ENCODE measurements at regions of chr13 and their contacts with region 1.

Region 1: DNA sequence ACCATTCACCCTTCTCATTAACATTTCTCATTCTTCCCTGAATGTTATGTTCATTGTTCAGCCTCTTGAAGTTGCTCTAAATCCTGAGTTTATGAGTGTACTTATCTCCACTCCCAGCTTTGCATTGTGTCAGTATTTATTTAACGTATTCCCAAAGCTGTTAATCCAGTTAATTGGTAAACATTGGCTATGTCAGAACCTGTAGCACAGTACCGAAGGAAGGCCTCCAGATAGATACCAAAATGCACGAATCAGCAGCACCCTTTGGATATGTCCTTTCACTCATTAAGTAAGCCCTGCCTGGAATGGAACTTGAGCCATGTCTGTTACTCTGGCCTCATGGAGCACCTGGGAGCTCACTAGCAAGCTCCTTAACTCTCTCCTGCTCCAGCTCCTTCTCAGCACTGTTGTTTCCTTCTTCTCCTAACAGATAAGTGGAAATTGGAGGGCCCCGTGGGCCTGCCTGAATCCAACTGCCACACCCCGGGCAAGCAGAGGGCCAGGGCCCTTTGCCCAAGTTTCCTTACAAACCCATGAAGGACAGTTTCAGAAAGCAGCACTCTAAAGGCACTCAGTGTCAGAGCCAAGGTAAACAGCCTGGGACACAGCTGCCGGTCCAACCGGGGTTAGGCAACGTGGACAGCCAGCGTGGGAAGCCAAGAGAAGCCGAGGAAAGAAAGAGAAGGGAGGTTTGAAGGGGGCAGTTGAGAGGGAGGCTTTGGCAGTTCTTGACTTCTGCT is 155.0 kb upstream of the SERP2 start:
- DNase-seq: peak; percentile 85
- H3K4me3 ChIP-seq: no peak overlapping the region
- H3K27ac ChIP-seq: peak overlapping the region; percentile 63 to 87 (median 78)
- H3K4me1 ChIP-seq: peaks cover 0 to 61% (median 52%) of the 10 kb centered on the region in 4 donors
- H3K27me3 ChIP-seq: no peaks in the 10 kb centered on the region
- CTCF ChIP-seq: no peak
- EP300 ChIP-seq: peak in 1 of 4 donors; percentile 28
- POLR2A ChIP-seq: no peak

Region 2: GRCh38 chr13:44050450-44051063 is 168.1 kb before region 1 on chr13:
- intact Hi-C with region 1: loop called (anchors 5 kb)
- DNase-seq: no peak
- H3K4me3 ChIP-seq: no peak overlapping the region
- H3K27ac ChIP-seq: peak overlapping the region in 1 of 4 donors; percentile 52
- H3K4me1 ChIP-seq: peaks cover 0 to 31% (median 27%) of the 10 kb centered on the region in 4 donors
- H3K27me3 ChIP-seq: no peaks in the 10 kb centered on the region
- CTCF ChIP-seq: peak; percentile 60 to 86 (median 72)
- EP300 ChIP-seq: no peak
- POLR2A ChIP-seq: no peak

Region 3: GRCh38 chr13:44141725-44142539 is 76.7 kb before region 1 on chr13:
- intact Hi-C with region 1: loop called (anchors 5 kb)
- DNase-seq: peak; percentile 99
- H3K4me3 ChIP-seq: peak overlapping the region; percentile 43 to 57 (median 52)
- H3K27ac ChIP-seq: peak overlapping the region; percentile 86 to 95 (median 90)
- H3K4me1 ChIP-seq: peaks cover 0 to 17% (median 10%) of the 10 kb centered on the region in 4 donors
- H3K27me3 ChIP-seq: no peaks in the 10 kb centered on the region
- CTCF ChIP-seq: peak in 1 of 4 experiments; percentile 32
- EP300 ChIP-seq: no peak
- POLR2A ChIP-seq: peak; percentile 91 to 93

Region 4: DNA sequence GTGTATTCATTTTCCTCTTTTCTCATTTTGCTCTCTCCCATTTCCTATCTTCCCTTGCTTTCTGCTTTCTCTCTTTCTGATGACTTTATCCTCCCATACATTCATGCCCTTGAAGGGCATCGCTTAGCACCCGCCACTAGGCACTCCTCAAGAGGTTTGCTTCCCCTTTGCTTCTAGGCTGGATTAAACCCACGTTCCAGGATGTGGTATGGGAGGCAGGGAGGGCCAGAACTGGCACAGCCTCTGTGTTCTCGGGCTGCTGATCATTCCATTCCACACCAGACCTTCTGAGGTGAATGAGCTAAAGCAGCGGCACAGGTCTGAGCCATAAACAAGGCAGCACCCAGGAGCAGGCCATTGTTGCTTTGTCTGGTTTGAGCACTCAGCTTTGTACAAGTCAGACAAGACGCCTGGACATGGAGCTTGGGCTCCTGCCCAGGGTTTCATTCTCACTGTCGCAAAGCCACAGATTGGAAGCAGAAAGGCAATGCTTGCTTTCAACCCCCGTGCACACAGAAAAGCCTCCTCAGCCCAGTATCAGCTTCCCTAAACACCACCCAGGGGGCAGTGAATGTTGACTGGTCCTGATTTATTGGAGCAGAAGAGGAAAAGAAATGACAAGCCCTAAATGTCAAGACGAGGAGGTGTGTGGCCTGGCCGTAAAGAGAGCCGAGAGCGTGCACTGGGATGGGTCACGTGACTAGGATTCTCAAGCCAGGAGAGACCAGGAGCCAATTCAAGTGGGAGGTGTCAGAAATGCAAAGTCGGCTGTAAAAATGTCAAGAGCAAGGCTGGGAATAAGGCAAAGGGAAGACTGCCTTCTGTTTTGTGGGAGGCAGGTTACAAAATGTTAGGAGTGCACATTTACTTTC is 63.0 kb before region 1 on chr13:
- intact Hi-C with region 1: loop called (anchors 5 kb)
- DNase-seq: peak; percentile 93
- H3K4me3 ChIP-seq: peak overlapping the region; percentile 7 to 40 (median 24)
- H3K27ac ChIP-seq: peak overlapping the region; percentile 77 to 82 (median 82)
- H3K4me1 ChIP-seq: peaks cover 0 to 48% (median 38%) of the 10 kb centered on the region in 4 donors
- H3K27me3 ChIP-seq: no peaks in the 10 kb centered on the region
- CTCF ChIP-seq: no peak
- EP300 ChIP-seq: peak in 1 of 4 donors; percentile 77
- POLR2A ChIP-seq: no peak

Region 5: DNA sequence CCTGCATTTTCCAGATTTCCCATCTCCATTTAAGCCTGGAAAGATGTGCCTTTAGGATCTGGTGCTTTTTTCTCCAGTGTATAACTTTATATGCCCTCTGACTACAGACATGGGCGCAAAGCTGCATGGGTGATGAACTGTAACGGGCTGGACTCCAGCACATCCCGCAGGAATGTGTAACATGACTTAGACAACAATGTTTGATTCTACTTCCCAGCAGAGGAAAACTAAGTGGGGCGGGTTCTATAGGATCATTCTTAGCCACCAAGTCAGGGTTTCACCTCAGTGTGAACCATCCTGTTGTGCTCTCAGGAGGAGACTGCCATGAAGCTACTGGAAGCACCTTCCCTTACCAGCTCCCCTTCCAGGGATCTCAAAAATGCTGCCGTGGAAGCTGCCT is 61.8 kb after region 1 on chr13:
- intact Hi-C with region 1: no loop called
- DNase-seq: no peak
- H3K4me3 ChIP-seq: no peak overlapping the region
- H3K27ac ChIP-seq: no peak overlapping the region
- H3K4me1 ChIP-seq: peaks cover 0 to 25% (median 15%) of the 10 kb centered on the region in 4 donors
- H3K27me3 ChIP-seq: no peaks in the 10 kb centered on the region
- CTCF ChIP-seq: no peak
- EP300 ChIP-seq: no peak
- POLR2A ChIP-seq: no peak

Region 6: GRCh38 chr13:44306401-44307192 is 87.9 kb after region 1 on chr13:
- intact Hi-C with region 1: loop called (anchors 2 kb)
- DNase-seq: peak; percentile 90
- H3K4me3 ChIP-seq: no peak overlapping the region
- H3K27ac ChIP-seq: peak overlapping the region; percentile 76 to 90 (median 86)
- H3K4me1 ChIP-seq: peaks cover 0 to 99% (median 91%) of the 10 kb centered on the region in 4 donors
- H3K27me3 ChIP-seq: no peaks in the 10 kb centered on the region
- CTCF ChIP-seq: no peak
- EP300 ChIP-seq: peak; percentile 44 to 93 (median 85)
- POLR2A ChIP-seq: no peak

Region 7: GRCh38 chr13:44373601-44374348 is 155.1 kb after region 1 on chr13 and contains the start of gene SERP2:
- intact Hi-C with region 1: loop called (anchors 5 kb)
- DNase-seq: peak; percentile 76
- H3K4me3 ChIP-seq: peak within 1 kb of the TSS; percentile 41 to 74 (median 58)
- H3K27ac ChIP-seq: peak within 1 kb of the TSS; percentile 48 to 75 (median 64)
- H3K4me1 ChIP-seq: peaks cover 0 to 23% (median 14%) of the 10 kb centered on the region in 4 donors
- H3K27me3 ChIP-seq: no peaks in the 10 kb centered on the region
- CTCF ChIP-seq: no peak
- EP300 ChIP-seq: no peak
- POLR2A ChIP-seq: no peak
- total RNA-seq, gene SERP2: 6.9 to 9.6 (median 8.6) TPM

Region 8: GRCh38 chr13:45393941-45394570 is 1175.4 kb after region 1 on chr13:
- intact Hi-C with region 1: no loop called
- DNase-seq: no peak
- H3K4me3 ChIP-seq: no peak overlapping the region
- H3K27ac ChIP-seq: no peak overlapping the region
- H3K4me1 ChIP-seq: no peaks in the 10 kb centered on the region
- H3K27me3 ChIP-seq: no peaks in the 10 kb centered on the region
- CTCF ChIP-seq: peak in 2 of 4 experiments; percentile 20 to 55
- EP300 ChIP-seq: no peak
- POLR2A ChIP-seq: no peak